ENCODE measurements at regions of chr3 and their contacts with region 1.

Region 1: DNA sequence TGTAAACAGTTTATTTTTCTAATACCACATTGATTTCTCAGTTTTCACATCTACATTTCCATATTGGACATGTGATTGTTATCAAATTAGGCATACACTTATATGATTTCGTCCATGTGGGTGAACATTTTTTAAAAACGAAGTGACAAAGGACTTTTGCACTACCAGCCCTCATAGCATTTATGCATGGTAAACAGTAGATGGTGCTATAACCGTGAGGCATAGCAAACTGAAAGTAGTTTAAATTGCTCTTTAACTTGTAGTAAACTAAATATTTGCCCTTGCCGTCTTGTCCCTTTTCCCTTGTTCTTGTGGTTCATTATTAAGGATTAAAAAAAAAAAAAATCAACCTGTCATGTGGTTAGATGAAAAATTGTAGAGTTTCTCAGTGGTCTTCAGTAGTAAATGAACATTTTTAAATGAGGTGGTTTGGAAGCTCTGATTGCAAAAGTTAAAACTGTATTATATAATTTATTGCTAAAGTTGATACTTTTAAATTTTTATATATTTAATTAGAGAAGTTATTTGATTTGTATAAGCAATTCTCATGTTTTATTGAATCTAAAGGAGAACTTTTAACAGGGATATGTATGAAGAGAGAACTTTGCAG is 24.0 kb downstream of the STX19 start:
- DNase-seq: peak in 3 of 14 experiments; percentile 67 to 74 (median 72)
- ATAC-seq: peak; percentile 85
- H3K4me3 ChIP-seq: peak overlapping the region; percentile 17
- H3K4me3 Mint-ChIP-seq: peak overlapping the region; percentile 81
- H3K27ac ChIP-seq: no peak overlapping the region
- H3K27ac Mint-ChIP-seq: no peak overlapping the region
- H3K4me1 ChIP-seq: no peaks in the 10 kb centered on the region
- H3K4me1 Mint-ChIP-seq: no peaks in the 10 kb centered on the region
- H3K27me3 ChIP-seq: no peaks in the 10 kb centered on the region
- H3K27me3 Mint-ChIP-seq: no peaks in the 10 kb centered on the region
- CTCF ChIP-seq: peak; percentile 97

Region 2: GRCh38 chr3:94069194-94069813 is 64.9 kb after region 1 on chr3:
- CTCF ChIA-PET with region 1: interaction called, 7 read pairs
- POLR2A ChIA-PET with region 1: no interaction called
- intact Hi-C with region 1: loop called (anchors 1 kb)
- DNase-seq: peak in 2 of 14 experiments; percentile 29 to 47
- ATAC-seq: peak; percentile 43
- H3K4me3 ChIP-seq: no peak overlapping the region
- H3K4me3 Mint-ChIP-seq: peak overlapping the region; percentile 17
- H3K27ac ChIP-seq: no peak overlapping the region
- H3K27ac Mint-ChIP-seq: peak overlapping the region; percentile 29
- H3K4me1 ChIP-seq: peaks cover 3% of the 10 kb centered on the region
- H3K4me1 Mint-ChIP-seq: peaks cover 85% of the 10 kb centered on the region
- H3K27me3 ChIP-seq: no peaks in the 10 kb centered on the region
- H3K27me3 Mint-ChIP-seq: no peaks in the 10 kb centered on the region
- CTCF ChIP-seq: peak; percentile 70

Region 3: GRCh38 chr3:94249585-94249984 is 245.2 kb after region 1 on chr3:
- CTCF ChIA-PET with region 1: no interaction called
- POLR2A ChIA-PET with region 1: no interaction called
- intact Hi-C with region 1: loop called in 1 of 2 experiments (anchors 10 kb)
- DNase-seq: peak; percentile 18 to 66 (median 40)
- ATAC-seq: no peak
- H3K4me3 ChIP-seq: no peak overlapping the region
- H3K4me3 Mint-ChIP-seq: no peak overlapping the region
- H3K27ac ChIP-seq: no peak overlapping the region
- H3K27ac Mint-ChIP-seq: no peak overlapping the region
- H3K4me1 ChIP-seq: no peaks in the 10 kb centered on the region
- H3K4me1 Mint-ChIP-seq: no peaks in the 10 kb centered on the region
- H3K27me3 ChIP-seq: no peaks in the 10 kb centered on the region
- H3K27me3 Mint-ChIP-seq: peaks cover 45% of the 10 kb centered on the region
- CTCF ChIP-seq: peak; percentile 79